ENCODE measurements at regions of chr4 and their contacts with region 1.

Region 1: DNA sequence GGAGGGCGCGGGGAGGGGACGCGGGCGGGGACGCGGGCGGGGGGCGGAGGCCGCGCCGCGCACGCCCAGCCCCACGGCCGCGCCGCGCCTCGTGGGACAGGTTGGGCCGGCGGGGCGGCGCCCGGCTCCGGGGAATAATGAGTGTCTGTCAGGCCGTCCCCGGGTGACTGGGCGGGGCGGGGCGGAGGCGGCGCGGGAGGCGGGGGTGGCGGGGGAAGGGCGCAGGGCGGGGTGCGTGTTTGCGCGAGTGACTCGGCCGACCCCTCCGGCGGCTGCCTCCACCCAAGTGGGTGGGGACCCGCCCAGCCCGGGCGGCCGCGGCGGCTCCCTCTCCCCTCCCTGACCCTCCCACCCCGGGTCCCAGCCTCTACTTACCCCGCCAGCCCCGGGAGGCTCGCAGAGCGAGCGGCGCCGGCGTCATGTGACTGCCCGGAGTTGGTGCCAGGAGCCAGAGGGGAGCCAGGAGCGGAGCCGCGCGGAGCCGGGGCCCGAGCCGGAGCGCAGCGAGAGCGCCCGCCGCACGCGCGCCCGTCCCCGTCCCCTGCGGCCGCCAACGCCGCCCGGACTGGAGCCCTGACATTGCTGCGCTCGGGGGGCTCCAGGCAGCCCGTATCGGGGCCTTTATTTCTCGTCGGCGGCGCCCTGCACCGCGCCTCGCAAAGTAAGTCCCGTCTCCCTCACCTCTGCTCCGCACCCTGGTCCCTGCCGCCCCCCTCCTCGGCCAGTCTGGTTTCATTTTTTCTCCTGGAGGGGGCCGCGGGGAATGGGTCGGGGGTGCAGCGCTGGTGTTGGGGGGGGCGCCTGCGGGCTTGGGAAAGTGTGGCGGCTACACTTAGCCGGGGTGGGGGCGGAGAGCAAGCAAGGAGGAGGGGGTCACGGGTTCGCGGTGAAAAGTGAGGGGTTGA is at the start of gene KLF3:
- DNase-seq: peak; percentile 87
- total RNA-seq, gene KLF3: 5.7 and 6.6 TPM in 2 replicates

Region 2: GRCh38 chr4:38582889-38583470 is 81.1 kb before region 1 on chr4:
- in situ Hi-C with region 1: loop called (anchors 10 kb)
- DNase-seq: no peak

Region 3: GRCh38 chr4:39205000-39205399 is 540.9 kb after region 1 on chr4:
- in situ Hi-C with region 1: no loop called
- DNase-seq: no peak